Endothelial cell of umbilical vein (primary cell): ENCODE measurements at regions of chr2 and their contacts with region 1.

Region 1: DNA sequence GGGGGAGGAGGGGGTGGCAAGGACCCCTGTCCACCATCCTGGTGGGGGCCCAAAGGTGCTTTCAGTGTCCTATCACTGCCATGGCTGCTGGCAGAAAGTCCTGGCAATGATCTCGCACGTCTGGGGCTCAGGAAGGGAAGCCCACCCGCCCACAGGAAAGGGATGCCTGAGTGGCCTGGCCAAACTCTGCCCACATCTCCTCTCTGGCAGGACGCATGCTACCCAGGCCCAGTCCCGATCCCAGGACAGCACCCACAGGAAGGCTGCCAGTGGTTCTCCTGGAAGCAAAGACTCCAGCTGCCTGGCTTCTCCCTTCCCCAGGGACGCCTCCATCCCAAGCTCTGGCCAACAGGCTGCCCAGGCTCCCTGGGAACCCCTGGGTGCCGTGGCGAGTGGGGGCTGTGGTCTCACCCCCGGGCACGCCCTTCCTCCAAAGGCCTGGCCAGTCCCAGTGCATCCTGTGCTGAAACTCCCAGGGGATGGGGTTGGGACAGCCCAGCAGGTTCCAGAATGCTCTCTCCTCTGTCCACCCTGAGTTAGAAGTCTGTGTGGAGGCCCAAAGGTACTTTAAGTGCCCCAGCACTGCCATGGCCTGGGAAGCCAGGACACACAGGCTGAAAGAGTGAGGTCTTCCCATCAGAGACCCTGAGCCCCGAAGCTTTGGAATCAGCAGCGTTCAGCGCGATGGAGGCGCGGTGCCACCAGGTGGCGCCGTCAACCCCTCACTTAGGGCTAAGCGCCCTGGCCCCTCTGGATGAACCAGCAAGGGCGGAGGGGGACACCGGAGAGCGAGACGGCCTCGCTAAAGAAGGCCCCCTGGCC is 29.8 kb upstream of the TAF1B start:
- DNase-seq: peak; percentile 61
- H3K4me3 ChIP-seq: no peak overlapping the region
- H3K27ac ChIP-seq: no peak overlapping the region
- H3K4me1 ChIP-seq: peaks cover 6% of the 10 kb centered on the region
- H3K27me3 ChIP-seq: no peaks in the 10 kb centered on the region
- CTCF ChIP-seq: peak; percentile 96 to 97
- POLR2A ChIP-seq: no peak

Region 2: GRCh38 chr2:9799665-9800632 is 13.6 kb before region 1 on chr2:
- CTCF ChIA-PET with region 1: interaction called, 48 read pairs
- POLR2A ChIA-PET with region 1: no interaction called
- dilution Hi-C with region 1: no loop called
- intact Hi-C with region 1: no loop called
- DNase-seq: peak; percentile 82
- H3K4me3 ChIP-seq: no peak overlapping the region
- H3K27ac ChIP-seq: no peak overlapping the region
- H3K4me1 ChIP-seq: no peaks in the 10 kb centered on the region
- H3K27me3 ChIP-seq: no peaks in the 10 kb centered on the region
- CTCF ChIP-seq: peak; percentile 96 to 99
- POLR2A ChIP-seq: no peak

Region 3: GRCh38 chr2:9843229-9844035 is 29.9 kb after region 1 on chr2 and contains the start of gene TAF1B:
- CTCF ChIA-PET with region 1: interaction called, 28 read pairs
- POLR2A ChIA-PET with region 1: interaction called, 4 read pairs
- dilution Hi-C with region 1: no loop called
- intact Hi-C with region 1: no loop called
- DNase-seq: peak; percentile 96
- H3K4me3 ChIP-seq: peak within 1 kb of the TSS; percentile 56 to 86 (median 84)
- H3K27ac ChIP-seq: peak within 1 kb of the TSS; percentile 78
- H3K4me1 ChIP-seq: peaks cover 28% of the 10 kb centered on the region
- H3K27me3 ChIP-seq: no peaks in the 10 kb centered on the region
- CTCF ChIP-seq: peak in 1 of 2 donors; percentile 42
- POLR2A ChIP-seq: peak; percentile 80
- total RNA-seq, gene TAF1B: 20.1 and 29.4 TPM in 2 replicates

Region 4: GRCh38 chr2:9914384-9915065 is 101.0 kb after region 1 on chr2:
- CTCF ChIA-PET with region 1: interaction called, 23 read pairs
- POLR2A ChIA-PET with region 1: no interaction called
- dilution Hi-C with region 1: no loop called
- intact Hi-C with region 1: loop called (anchors 5 kb)
- DNase-seq: peak; percentile 37
- H3K4me3 ChIP-seq: no peak overlapping the region
- H3K27ac ChIP-seq: peak overlapping the region; percentile 6
- H3K4me1 ChIP-seq: peaks cover 6% of the 10 kb centered on the region
- H3K27me3 ChIP-seq: no peaks in the 10 kb centered on the region
- CTCF ChIP-seq: no peak
- POLR2A ChIP-seq: no peak

Region 5: DNA sequence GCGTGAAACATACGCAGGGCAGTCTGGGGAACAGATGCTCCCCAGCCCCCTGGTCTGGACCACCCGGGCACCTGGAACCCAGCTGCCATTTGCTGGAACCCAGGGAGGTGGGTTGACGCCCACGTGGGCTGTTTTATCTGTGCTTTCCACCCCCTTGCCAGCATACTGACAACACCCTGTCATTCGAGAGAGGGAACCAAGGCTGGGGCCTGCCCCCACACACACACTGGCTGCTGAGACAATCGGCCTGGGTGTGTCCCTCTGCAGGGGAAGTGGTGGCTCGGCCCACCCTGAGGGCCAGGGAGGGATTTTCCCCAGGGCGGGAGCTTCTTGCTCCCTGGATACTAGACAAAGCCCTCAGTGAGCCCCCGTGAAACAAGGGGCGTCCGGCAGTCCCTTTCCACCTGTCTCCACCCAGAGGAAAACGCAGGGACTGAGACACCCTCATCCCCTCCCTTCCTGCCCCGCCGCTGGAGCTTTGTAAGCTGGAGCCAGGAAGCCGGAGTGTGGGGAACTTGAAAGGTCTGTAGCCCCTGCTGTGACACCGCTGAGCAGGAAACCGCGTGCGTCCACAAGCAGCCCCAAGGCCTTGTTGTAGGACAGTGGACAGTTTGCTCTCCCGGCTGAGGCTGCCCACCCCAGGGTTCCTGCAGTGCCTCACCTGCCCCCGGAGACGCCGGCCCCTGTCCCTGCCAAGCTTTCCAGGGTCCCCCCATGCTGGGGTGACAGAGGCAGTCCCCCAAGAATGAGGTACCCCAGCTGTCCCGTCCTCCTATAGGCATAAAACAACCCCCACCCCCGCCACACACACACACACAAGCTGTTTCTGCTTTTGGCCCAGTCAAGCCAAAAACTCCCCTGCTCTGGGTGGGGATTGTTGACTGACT is 215.7 kb after region 1 on chr2:
- CTCF ChIA-PET with region 1: interaction called, 37 read pairs
- POLR2A ChIA-PET with region 1: no interaction called
- dilution Hi-C with region 1: no loop called
- intact Hi-C with region 1: loop called (anchors 5 kb)
- DNase-seq: peak; percentile 19
- H3K4me3 ChIP-seq: no peak overlapping the region
- H3K27ac ChIP-seq: no peak overlapping the region
- H3K4me1 ChIP-seq: peaks cover 7% of the 10 kb centered on the region
- H3K27me3 ChIP-seq: no peaks in the 10 kb centered on the region
- CTCF ChIP-seq: no peak
- POLR2A ChIP-seq: no peak

Region 6: GRCh38 chr2:10072656-10073480 is 259.3 kb after region 1 on chr2:
- CTCF ChIA-PET with region 1: interaction called, 13 read pairs
- POLR2A ChIA-PET with region 1: no interaction called
- dilution Hi-C with region 1: no loop called
- intact Hi-C with region 1: no loop called
- DNase-seq: peak; percentile 76
- H3K4me3 ChIP-seq: no peak overlapping the region
- H3K27ac ChIP-seq: no peak overlapping the region
- H3K4me1 ChIP-seq: no peaks in the 10 kb centered on the region
- H3K27me3 ChIP-seq: peaks cover 11 to 14% of the 10 kb centered on the region in 2 experiments
- CTCF ChIP-seq: peak; percentile 87 to 90
- POLR2A ChIP-seq: no peak

Region 7: DNA sequence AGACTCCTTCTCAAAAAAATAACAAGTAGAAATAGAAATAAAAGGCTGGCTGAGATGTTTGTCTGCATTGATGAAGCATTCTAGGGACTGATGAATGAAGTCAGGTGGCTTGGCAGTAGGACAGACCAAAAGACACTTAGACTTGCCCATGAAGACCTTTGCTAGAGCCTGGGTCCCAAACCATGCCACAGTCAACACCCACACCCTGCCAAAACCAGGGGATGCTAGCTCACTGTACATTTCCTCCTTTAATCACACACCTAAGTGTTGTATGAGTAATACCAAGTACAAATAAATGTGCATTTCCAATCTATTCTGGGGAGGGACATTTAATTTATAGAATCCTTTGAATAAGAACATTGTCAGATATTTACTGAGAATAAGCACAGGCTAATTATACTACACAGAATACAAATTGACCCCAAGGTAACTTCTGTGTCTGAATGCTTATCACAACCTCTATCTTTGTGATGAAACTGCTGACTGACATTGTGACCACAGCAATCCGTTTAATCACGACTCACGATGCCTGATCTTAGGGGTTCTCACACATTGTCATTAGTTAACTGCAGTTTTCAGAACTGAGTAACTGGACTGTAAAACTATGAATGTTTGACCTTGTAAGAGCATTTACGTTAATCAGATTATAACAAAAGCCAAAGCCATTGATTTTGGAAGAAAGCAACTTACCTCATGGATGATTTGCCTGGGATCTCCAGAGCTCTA is 886.7 kb after region 1 on chr2:
- CTCF ChIA-PET with region 1: no interaction called
- POLR2A ChIA-PET with region 1: no interaction called
- dilution Hi-C with region 1: no loop called
- intact Hi-C with region 1: no loop called
- DNase-seq: no peak
- H3K4me3 ChIP-seq: no peak overlapping the region
- H3K27ac ChIP-seq: no peak overlapping the region
- H3K4me1 ChIP-seq: no peaks in the 10 kb centered on the region
- H3K27me3 ChIP-seq: peaks cover 0 to 3% of the 10 kb centered on the region in 2 experiments
- CTCF ChIP-seq: no peak
- POLR2A ChIP-seq: no peak